BJ (cell line): ENCODE measurements at regions of chr17 and their contacts with region 1.

Region 1: DNA sequence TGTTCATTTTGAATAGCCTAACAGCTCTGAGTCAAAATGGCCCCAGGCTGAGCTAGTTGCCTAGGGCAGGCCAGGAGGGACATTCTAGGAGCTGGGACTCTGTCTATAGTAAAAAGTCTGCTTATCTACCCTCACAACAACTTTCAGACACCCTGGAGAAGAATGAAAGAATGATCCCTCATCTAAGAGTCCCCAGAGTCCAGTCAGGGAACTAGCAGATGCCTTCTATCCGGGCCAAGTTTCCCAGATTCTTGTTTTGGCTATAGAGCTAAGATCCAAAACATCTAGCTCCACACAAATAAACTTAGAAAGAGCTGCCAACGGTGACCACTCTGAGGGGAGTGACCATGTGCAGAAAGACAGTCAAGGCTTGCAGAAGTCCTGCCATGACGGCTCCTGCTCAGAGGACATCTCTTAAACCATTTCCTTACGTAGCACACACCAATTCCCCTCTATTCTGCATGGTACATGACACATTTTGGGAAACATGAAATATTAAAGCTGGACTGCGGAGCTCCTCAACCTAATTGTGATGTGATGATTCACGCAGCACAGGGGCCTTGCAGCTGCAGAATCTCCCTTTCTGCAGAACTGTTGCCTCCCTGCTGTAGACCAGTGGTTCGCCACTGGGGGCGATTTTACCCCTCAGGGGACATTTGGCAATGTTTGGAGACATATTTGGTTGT is 24.2 kb downstream of the FAM20A start:
- DNase-seq: peak; percentile 34
- H3K4me3 ChIP-seq: no peak overlapping the region
- H3K27me3 ChIP-seq: no peaks in the 10 kb centered on the region
- CTCF ChIP-seq: peak; percentile 55

Region 2: GRCh38 chr17:68398691-68399637 is 178.0 kb before region 1 on chr17:
- CTCF ChIA-PET with region 1: no interaction called
- POLR2A ChIA-PET with region 1: no interaction called
- DNase-seq: no peak
- H3K4me3 ChIP-seq: no peak overlapping the region
- H3K27me3 ChIP-seq: no peaks in the 10 kb centered on the region
- CTCF ChIP-seq: peak; percentile 89

Region 3: GRCh38 chr17:68457539-68458259 is 119.3 kb before region 1 on chr17:
- CTCF ChIA-PET with region 1: no interaction called
- POLR2A ChIA-PET with region 1: no interaction called
- DNase-seq: peak; percentile 84
- H3K4me3 ChIP-seq: peak overlapping the region; percentile 55
- H3K27me3 ChIP-seq: 0 out of 2 replicates have a peak, but pooled peaks cover 2% of the 10 kb centered on the region
- CTCF ChIP-seq: 0 out of 2 replicates have a peak, but pooled peaks have one; percentile 5

Region 4: DNA sequence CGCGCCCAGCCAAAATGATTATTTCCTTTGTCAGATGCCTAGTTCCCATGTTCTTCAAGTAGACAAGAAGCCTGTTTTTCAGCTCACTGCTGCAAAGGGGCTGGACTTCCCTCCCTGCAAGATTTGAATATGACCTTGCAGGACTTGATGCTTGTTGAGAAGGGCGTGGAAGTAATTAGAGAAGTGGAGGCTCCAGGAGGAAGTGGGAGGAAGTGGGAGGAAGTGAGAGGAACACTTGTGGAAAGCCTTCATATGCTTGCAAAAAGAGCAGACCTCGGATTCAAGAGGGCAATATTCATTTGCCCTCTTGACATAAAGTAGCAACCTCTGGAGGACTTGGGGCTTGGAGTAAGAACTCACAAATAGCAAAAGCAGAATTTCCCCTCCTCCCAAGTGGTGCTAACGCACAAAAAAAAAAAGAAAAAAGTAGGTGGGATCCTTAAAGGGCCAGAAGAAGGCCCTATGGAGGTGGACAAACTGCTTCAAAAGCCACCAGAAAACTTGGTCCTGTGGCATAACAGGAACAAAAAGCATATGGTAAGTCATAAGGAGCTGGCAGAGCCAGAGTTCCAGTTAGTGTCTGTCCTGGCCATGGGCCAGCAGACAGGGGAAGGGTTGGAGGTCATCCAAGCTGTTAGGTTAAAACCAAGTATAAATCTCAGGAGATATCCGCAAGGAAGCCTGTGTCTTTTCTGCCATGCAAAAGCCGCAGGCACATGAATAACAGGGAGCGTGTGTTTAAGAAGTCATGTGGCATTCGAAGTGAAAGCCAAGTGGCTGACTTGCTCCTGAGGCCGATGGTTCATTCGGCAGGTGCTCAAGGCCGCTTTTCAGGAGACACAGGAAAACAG is 85.3 kb before region 1 on chr17:
- CTCF ChIA-PET with region 1: no interaction called
- POLR2A ChIA-PET with region 1: no interaction called
- DNase-seq: no peak
- H3K4me3 ChIP-seq: no peak overlapping the region
- H3K27me3 ChIP-seq: no peaks in the 10 kb centered on the region; the same call in 1 of the 2 replicates
- CTCF ChIP-seq: no peak

Region 5: GRCh38 chr17:68566442-68566738 is 10.6 kb before region 1 on chr17:
- CTCF ChIA-PET with region 1: interaction called, 18 read pairs
- POLR2A ChIA-PET with region 1: no interaction called
- DNase-seq: no peak
- H3K4me3 ChIP-seq: no peak overlapping the region
- H3K27me3 ChIP-seq: peaks cover 1% of the 10 kb centered on the region; the same call in 1 of the 2 replicates
- CTCF ChIP-seq: no peak

Region 6: GRCh38 chr17:68832109-68832802 is 255.3 kb after region 1 on chr17:
- CTCF ChIA-PET with region 1: no interaction called
- POLR2A ChIA-PET with region 1: no interaction called
- DNase-seq: no peak
- H3K4me3 ChIP-seq: no peak overlapping the region
- H3K27me3 ChIP-seq: peaks cover 1% of the 10 kb centered on the region; the same call in 1 of the 2 replicates
- CTCF ChIP-seq: no peak